K562 (cell line): ENCODE measurements at regions of chr11 and their contacts with region 1.

Region 1: DNA sequence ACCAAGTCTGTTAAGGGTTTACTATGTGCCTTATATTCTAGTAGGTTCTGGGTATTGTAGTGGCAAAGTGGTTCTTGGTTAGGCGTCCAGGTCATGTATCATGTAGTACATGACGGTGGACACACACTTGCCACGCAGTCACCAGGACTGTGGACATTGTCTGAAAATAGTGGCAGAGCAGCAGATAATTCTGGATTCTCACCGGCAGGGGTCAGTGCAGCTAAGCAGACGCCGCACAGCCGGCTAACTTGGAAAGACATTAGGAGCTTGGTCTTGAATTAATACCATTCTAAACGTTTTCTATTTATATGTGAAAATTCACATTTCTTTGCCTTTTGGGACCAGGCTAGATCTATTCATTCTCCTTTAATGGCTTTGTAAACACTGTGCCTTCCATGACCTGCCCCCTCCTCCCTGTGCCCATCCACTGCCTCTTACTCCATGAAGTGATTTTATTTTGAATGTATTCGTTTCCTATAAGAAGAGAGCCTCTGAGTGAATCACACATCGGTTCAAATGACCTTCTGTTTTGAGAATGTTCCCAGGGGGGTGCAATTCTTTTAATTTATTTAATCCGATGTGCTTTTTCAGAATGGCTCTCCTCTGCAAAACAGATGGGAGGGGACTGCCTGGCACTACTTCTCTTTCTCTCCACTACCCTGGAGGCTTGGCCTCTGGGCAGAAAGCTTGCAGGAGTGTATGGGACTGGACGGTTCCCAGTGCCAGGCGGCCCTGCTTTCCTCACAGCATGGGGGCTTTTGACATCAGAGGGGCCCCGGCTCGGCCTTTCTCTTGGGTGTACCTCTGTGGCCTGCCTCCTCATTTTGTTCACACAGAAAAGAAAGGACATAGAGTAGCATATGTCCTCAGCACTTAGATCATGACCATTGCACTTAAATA is 378.0 kb downstream of the NTM start:
- DNase-seq: peak; percentile 27 to 53 (median 44)
- ATAC-seq: peak; percentile 75
- H3K4me3 ChIP-seq: no peak overlapping the region
- H3K27ac ChIP-seq: no peak overlapping the region
- H3K4me1 ChIP-seq: no peaks in the 10 kb centered on the region
- H3K27me3 ChIP-seq: no peaks in the 10 kb centered on the region
- CTCF ChIP-seq: peak; percentile 23 to 70 (median 57); a peak in 4 of 6 replicates
- EP300 ChIP-seq: no peak
- POLR2A ChIP-seq: no peak
- RAD21 ChIP-seq: peak; percentile 42 to 53

Region 2: GRCh38 chr11:131684111-131685060 is 64.0 kb before region 1 on chr11:
- CTCF ChIA-PET with region 1: no interaction called
- POLR2A ChIA-PET with region 1: no interaction called
- in situ Hi-C with region 1: no loop called
- intact Hi-C with region 1: no loop called
- DNase-seq: no peak
- ATAC-seq: no peak
- H3K4me3 ChIP-seq: no peak overlapping the region
- H3K27ac ChIP-seq: no peak overlapping the region
- H3K4me1 ChIP-seq: peaks cover 0 to 7% of the 10 kb centered on the region in 2 experiments; a peak in 2 of 5 replicates
- H3K27me3 ChIP-seq: peaks cover 0 to 11% of the 10 kb centered on the region in 2 experiments; a peak in 3 of 5 replicates
- CTCF ChIP-seq: no peak
- EP300 ChIP-seq: no peak
- POLR2A ChIP-seq: no peak
- RAD21 ChIP-seq: no peak

Region 3: DNA sequence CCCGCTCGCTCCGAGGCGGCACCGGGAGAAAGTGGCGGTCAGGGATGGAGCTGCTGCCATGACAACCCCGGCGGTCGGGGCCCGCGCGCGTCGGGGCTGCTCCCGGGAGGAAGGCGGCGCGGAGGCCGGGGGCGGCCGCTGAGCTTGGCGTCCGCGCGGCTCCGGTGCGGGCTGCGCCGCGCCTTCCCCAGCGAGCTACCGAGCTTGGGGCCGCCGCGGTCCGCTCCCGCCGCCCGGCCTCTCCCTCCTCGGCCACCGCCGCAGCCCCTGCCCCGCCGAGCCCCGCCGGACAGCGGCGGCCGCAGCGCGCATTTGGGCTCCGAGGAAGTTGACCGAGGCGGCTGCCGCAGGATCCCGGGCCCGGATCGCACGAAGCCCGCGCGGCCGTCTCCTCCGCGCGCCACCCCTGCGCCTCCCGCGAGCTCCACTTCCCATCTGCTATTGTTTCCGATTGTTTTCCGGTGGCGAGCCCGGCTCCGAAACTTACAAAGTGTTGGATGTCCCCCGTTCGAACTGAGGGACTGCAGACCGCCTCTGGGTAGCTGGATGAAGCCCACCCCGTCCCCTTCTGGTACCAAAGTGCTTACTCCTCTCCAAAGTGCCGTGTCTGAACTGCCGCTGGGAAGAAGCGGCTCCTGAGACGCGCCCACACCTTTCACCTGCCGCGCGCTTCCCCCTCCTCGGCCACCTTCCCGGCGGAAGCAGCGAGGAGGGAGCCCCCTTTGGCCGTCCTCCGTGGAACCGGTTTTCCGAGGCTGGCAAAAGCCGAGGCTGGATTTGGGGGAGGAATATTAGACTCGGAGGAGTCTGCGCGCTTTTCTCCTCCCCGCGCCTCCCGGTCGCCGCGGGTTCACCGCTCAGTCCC is 162.4 kb after region 1 on chr11:
- CTCF ChIA-PET with region 1: no interaction called
- POLR2A ChIA-PET with region 1: no interaction called
- in situ Hi-C with region 1: no loop called
- intact Hi-C with region 1: no loop called
- DNase-seq: no peak
- ATAC-seq: no peak
- H3K4me3 ChIP-seq: no peak overlapping the region
- H3K27ac ChIP-seq: no peak overlapping the region
- H3K4me1 ChIP-seq: no peaks in the 10 kb centered on the region
- H3K27me3 ChIP-seq: no peaks in the 10 kb centered on the region
- CTCF ChIP-seq: no peak
- EP300 ChIP-seq: no peak
- POLR2A ChIP-seq: no peak
- RAD21 ChIP-seq: no peak

Region 4: GRCh38 chr11:132037956-132038355 is 289.6 kb after region 1 on chr11:
- CTCF ChIA-PET with region 1: no interaction called
- POLR2A ChIA-PET with region 1: no interaction called
- in situ Hi-C with region 1: no loop called
- intact Hi-C with region 1: loop called (anchors 5 kb)
- DNase-seq: no peak
- ATAC-seq: no peak
- H3K4me3 ChIP-seq: no peak overlapping the region
- H3K27ac ChIP-seq: no peak overlapping the region
- H3K4me1 ChIP-seq: no peaks in the 10 kb centered on the region
- H3K27me3 ChIP-seq: no peaks in the 10 kb centered on the region
- CTCF ChIP-seq: no peak
- EP300 ChIP-seq: no peak
- POLR2A ChIP-seq: no peak
- RAD21 ChIP-seq: no peak

Region 5: DNA sequence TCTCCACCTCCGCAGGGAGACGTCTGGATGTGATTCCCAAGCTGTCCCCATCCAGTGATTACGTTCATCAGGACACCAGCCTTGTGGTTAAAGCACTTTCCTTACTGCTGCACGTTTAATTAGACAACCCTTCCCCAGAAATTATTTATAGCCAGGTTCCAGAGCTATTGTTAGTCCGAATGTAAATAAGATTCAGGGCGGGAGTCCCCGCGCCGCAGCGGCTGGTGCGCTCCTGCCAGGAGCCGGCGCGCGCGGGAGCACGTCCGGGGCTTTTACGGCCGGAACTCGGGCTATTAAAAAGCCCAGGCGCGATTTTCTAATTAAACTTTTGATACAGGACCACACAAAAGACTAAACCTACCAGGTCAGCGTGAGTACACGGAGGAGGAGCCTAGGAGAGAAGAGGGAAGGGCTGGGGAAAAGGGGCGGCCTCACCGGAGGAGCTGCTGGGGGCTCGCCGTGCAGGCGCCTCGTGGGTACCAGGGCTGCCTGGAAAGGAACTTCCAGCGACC is 1245.6 kb after region 1 on chr11:
- CTCF ChIA-PET with region 1: no interaction called
- POLR2A ChIA-PET with region 1: no interaction called
- in situ Hi-C with region 1: no loop called
- intact Hi-C with region 1: no loop called
- DNase-seq: no peak
- ATAC-seq: no peak
- H3K4me3 ChIP-seq: no peak overlapping the region
- H3K27ac ChIP-seq: no peak overlapping the region
- H3K4me1 ChIP-seq: no peaks in the 10 kb centered on the region
- H3K27me3 ChIP-seq: no peaks in the 10 kb centered on the region
- CTCF ChIP-seq: no peak
- EP300 ChIP-seq: no peak
- POLR2A ChIP-seq: no peak
- RAD21 ChIP-seq: no peak

Region 6: DNA sequence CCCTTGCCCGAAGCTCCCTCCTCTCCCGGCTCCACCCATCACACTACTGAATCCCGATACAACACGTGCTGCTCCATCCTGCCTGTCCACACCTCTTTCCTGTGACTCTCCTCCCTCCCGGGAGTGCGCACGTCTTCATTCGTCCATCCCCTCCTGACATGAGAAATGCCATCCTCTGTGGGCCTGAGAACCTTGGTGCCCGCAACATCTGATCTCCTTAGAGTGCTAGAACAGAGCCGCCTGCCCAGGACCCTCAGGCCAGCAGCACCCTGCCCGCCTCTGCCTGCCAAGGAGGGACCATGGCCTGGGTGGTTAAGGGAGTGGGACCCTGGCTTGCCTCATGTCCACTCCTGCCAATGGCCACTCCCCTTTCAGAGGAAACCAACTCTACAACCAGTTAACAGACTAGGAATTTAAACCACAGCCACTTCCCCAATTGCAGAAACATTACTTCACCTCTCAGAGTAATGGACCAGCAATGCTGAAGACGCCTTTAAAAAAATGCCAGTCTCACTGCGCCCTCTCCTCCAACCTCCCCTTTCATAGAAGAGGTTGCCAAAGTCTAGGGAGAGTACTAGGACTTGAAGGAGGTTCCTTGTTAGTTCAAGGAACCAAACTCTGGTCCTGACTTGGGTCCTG is 1317.6 kb after region 1 on chr11:
- CTCF ChIA-PET with region 1: no interaction called
- POLR2A ChIA-PET with region 1: no interaction called
- in situ Hi-C with region 1: no loop called
- intact Hi-C with region 1: loop called (anchors 5 kb)
- DNase-seq: no peak
- ATAC-seq: no peak
- H3K4me3 ChIP-seq: no peak overlapping the region
- H3K27ac ChIP-seq: no peak overlapping the region
- H3K4me1 ChIP-seq: peaks cover 0 to 6% of the 10 kb centered on the region in 2 experiments; a peak in 1 of 5 replicates
- H3K27me3 ChIP-seq: peaks cover 0 to 8% of the 10 kb centered on the region in 2 experiments; a peak in 2 of 5 replicates
- CTCF ChIP-seq: no peak
- EP300 ChIP-seq: no peak
- POLR2A ChIP-seq: no peak
- RAD21 ChIP-seq: no peak